A549 (cell line): ENCODE measurements at regions of chr12 and their contacts with region 1.

Region 1: GRCh38 chr12:442235-442884 is 17.4 kb upstream of the B4GALNT3 start:
- DNase-seq: peak; percentile 63 to 66
- ATAC-seq: peak; percentile 68 to 85; a peak in 5 of 6 replicates
- H3K4me3 ChIP-seq: no peak overlapping the region
- H3K27ac ChIP-seq: no peak overlapping the region
- H3K4me1 ChIP-seq: no peaks in the 10 kb centered on the region
- CTCF ChIP-seq: peak; percentile 85
- EP300 ChIP-seq: no peak
- POLR2A ChIP-seq: no peak
- RAD21 ChIP-seq: peak; percentile 80 to 83

Region 2: GRCh38 chr12:422526-422925 is 19.8 kb before region 1 on chr12:
- CTCF ChIA-PET with region 1: interaction called, 110 read pairs
- POLR2A ChIA-PET with region 1: no interaction called
- DNase-seq: no peak
- ATAC-seq: no peak
- H3K4me3 ChIP-seq: no peak overlapping the region
- H3K27ac ChIP-seq: no peak overlapping the region
- H3K4me1 ChIP-seq: no peaks in the 10 kb centered on the region
- CTCF ChIP-seq: no peak
- EP300 ChIP-seq: no peak
- POLR2A ChIP-seq: no peak
- RAD21 ChIP-seq: no peak

Region 3: DNA sequence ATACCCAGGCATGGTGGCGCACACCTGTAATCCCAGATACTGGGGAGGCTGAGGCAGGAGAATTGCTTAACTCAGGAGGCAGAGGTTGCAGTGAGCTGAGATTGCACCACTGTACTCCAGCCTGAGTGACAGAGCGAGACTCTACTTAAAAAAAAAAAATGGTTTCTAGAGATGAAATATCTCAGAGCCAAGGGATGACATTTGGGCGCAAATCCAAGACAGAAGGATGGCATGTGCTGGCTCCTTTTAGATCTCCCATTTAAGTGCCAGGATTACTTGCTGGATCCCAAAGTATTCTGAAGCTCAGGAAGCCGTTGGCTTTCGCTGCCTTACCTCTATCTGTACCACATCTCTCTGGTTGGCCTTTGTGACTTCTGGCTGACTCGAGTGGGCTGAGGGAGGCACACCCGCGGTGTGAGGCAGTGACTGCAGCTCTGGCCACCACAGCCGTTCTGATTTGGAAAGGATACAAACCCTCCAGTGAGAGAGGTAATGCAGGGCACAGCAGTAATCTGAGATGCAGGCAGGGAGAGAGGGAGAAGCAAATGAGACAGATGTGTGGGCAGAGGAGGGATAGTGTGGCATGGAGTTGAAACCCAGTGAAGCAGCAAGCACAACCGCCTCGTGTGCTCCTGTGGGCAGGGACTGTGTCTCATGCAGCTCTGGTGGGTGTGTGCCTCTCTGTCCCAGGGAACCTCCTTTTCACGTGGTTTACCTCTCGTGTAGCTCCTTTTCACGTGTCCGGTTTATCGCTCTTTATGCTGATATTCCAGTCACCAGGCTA is 22.3 kb after region 1 on chr12:
- CTCF ChIA-PET with region 1: interaction called, 12 read pairs
- POLR2A ChIA-PET with region 1: no interaction called
- DNase-seq: no peak
- ATAC-seq: no peak
- H3K4me3 ChIP-seq: no peak overlapping the region
- H3K27ac ChIP-seq: no peak overlapping the region
- H3K4me1 ChIP-seq: peaks cover 13% of the 10 kb centered on the region; the same call in 2 of the 3 replicates
- CTCF ChIP-seq: no peak
- EP300 ChIP-seq: no peak
- POLR2A ChIP-seq: no peak
- RAD21 ChIP-seq: no peak

Region 4: DNA sequence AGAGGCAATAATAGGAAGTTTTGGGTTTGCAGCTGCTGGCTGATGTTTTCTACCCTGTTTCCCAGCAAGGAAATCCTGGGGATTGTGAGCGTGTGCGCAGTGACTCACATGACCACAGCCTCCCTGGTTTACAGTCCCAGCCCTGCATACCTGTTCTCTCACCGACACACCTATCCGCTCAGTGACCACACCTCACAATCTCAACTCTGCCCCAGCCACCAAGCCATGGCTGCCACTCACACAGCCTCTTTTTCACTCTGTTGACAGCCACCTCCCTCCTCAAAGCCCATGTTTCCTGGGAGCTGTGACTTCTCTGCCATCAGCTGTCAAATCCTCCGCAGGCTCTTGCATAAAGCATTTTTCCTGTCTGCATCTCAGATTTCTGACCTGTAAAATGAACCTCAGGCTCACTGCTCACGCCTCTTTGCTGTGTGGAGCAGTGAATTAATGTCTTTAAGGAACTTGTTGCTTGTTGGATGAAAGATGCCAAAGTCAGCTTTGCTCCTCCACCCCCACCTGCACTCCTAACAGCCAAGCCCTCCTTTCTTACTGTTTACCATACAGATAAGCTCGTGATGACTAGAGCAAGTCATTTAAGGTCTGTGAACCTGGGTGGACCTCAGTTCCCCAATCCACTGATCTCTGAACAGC is 60.9 kb after region 1 on chr12:
- CTCF ChIA-PET with region 1: interaction called, 12 read pairs
- POLR2A ChIA-PET with region 1: no interaction called
- DNase-seq: no peak
- ATAC-seq: peak in 1 of 2 experiments; percentile 33; a peak in 3 of 6 replicates
- H3K4me3 ChIP-seq: no peak overlapping the region
- H3K27ac ChIP-seq: no peak overlapping the region
- H3K4me1 ChIP-seq: no peaks in the 10 kb centered on the region
- CTCF ChIP-seq: no peak
- EP300 ChIP-seq: no peak
- POLR2A ChIP-seq: no peak
- RAD21 ChIP-seq: no peak

Region 5: DNA sequence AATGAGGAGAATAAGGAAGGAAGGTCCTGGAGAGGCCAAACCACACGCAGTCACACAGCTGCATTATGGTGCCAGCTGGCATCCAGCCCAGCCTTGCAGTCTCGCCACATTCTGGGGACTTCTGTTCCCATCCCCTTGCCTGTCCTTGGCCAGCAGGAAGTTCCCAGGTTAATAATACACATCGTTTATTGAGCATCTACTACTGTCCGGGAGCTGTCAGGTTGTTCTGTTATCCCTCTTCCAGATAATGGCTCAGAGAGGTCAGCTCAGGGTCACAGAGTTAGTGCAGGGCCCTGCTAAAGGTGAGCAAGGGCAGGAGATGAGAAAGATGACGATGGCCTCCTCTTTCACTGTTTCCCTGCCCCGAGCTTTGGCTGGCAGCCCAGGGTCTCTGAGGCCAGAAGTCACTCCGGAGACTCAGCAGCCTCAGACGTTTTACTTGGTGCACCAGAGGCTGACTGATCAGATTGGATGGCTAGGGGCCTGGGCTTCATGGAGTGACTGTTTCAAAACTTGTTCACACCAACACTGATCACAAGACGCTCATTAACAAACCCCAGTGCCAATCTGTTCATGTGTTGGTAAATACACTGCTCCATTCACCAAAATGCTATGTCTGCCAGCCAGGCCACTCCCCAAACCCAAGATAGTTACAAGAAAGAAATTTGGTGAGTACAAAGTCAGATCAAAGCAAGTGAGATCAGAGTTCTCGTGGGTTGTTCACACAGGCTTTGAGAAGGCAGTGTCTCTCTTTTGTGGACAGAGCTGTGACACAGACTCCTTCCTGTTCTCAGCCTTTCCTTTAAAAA is 96.6 kb after region 1 on chr12:
- CTCF ChIA-PET with region 1: interaction called, 45 read pairs
- POLR2A ChIA-PET with region 1: no interaction called
- DNase-seq: peak in 1 of 2 experiments; percentile 55
- ATAC-seq: no peak; a peak in 2 of 6 replicates
- H3K4me3 ChIP-seq: no peak overlapping the region
- H3K27ac ChIP-seq: 0 out of 6 replicates have a peak overlapping the region, but pooled peaks of 1 of the 2 experiments have one; percentile 19
- H3K4me1 ChIP-seq: peaks cover 16% of the 10 kb centered on the region; the same call in 1 of the 3 replicates
- CTCF ChIP-seq: no peak
- EP300 ChIP-seq: no peak
- POLR2A ChIP-seq: no peak
- RAD21 ChIP-seq: no peak

Region 6: DNA sequence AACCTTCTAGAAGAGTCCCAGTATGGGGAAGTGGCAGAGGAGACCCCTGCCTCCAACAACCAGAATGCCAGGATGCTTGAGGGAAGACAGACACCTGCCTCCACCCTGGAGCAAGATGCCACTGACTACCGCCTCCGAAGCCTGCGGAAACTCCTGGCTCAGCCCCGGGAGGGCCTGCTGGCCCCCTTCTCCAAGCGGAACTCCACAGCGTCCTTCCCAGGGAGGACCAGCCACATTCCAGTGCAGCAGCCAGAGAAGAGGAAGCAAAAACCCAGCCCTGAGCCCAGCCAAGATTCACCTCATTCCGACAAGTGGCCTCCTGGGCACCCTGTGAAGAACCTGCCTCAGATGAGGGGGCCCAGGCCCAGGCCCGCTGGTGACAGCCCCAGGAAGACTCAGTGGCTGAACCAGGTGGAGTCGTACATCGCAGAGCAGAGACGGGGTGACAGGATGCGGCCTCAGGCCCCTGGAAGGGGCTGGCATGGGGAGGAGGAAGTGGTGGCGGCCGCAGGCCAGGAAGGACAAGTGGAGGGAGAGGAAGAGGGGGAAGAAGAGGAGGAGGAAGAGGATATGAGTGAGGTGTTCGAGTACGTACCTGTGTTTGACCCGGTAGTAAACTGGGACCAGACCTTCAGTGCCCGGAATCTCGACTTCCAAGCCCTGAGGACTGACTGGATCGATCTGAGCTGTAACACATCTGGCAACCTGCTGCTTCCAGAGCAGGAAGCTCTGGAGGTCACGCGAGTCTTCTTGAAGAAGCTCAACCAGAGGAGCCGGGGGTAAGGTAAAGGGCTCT is 111.0 kb after region 1 on chr12:
- CTCF ChIA-PET with region 1: interaction called, 252 read pairs
- POLR2A ChIA-PET with region 1: no interaction called
- DNase-seq: no peak
- ATAC-seq: no peak
- H3K4me3 ChIP-seq: no peak overlapping the region
- H3K27ac ChIP-seq: peak overlapping the region; percentile 11 to 42; a peak in 3 of 6 replicates
- H3K4me1 ChIP-seq: peaks cover 13% of the 10 kb centered on the region; the same call in 2 of the 3 replicates
- CTCF ChIP-seq: no peak
- EP300 ChIP-seq: no peak
- POLR2A ChIP-seq: no peak
- RAD21 ChIP-seq: no peak